Cardiac septum (tissue), 1 donor: ENCODE measurements at regions of chr1 and their contacts with region 1.

Region 1: DNA sequence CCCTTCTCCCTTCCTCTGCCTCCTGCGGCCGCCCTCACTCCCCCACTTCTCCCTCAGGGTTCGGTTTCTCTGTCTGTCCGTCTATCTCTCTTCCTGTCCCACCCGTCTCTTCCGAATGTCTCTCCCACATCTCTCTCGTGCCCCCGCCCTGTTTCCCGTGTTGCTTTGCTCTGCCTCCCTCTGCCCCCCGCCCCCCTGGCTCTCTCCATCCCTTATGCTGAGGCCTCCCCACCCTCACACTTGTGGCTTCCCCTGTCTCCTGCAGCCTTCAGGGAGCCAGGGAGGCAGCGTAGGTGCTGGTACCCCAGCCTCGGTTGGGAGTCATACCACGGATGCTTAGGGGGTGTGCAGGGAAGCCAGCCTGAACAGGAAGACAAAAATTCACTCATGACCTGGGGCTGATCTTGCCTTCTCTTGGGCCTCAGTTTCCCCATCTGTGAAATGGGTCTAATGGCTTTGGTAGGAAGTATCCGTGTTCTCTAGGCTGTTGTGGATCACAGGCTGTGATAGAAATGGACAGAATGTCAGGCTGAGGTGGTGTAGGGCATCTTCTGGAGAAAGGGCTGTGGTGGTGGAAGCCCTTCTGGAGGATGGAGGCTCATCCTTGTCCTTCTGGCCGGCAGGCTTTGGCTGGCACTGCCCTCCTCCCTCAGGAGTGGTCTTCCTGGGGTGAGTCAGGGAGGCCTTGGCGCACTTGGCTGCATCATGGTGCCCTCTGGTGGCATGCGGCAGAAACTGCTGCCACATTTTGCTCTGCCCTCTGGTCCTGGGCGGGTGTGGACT is 55.5 kb downstream of the FOXO6 start:
- DNase-seq: peak; percentile 88

Region 2: DNA sequence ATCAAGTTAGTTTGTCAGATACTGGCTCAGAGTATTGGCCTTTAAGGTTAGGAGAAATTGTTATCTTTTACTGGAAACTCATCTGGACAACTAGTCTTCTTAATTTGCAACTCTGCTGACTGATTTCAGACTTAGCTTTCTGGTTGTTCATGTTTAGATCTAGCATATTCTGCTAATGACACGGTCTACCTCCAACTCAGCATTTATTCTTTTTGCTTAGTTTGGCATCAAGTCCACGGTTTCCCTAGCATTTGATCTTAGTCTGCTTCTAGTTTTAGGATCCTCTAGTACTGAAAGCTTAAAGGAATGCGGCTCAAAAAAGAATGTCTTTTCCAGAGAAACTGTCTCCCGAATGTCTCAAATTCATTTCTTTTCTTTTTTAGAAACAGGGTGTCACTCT is 319.6 kb before region 1 on chr1:
- intact Hi-C with region 1: no loop called
- DNase-seq: no peak

Region 3: GRCh38 chr1:41268154-41268770 is 148.5 kb before region 1 on chr1:
- intact Hi-C with region 1: loop called (anchors 1 kb)
- DNase-seq: peak; percentile 85

Region 4: GRCh38 chr1:41282679-41283317 is 133.9 kb before region 1 on chr1:
- intact Hi-C with region 1: loop called (anchors 2 kb)
- DNase-seq: no peak

Region 5: GRCh38 chr1:41322835-41323627 is 93.7 kb before region 1 on chr1:
- intact Hi-C with region 1: loop called (anchors 2 kb)
- DNase-seq: no peak

Region 6: GRCh38 chr1:41360993-41361753 is 55.6 kb before region 1 on chr1 and contains the start of gene FOXO6:
- intact Hi-C with region 1: loop called (anchors 2 kb)
- DNase-seq: peak; percentile 99
- total RNA-seq, gene FOXO6: 2.0 TPM